BJ (cell line): ENCODE measurements at regions of chr4 and their contacts with region 1.

Region 1: GRCh38 chr4:153142700-153143438 is 61.4 kb upstream of the TRIM2 start:
- DNase-seq: no peak
- H3K4me3 ChIP-seq: no peak overlapping the region
- H3K27me3 ChIP-seq: peaks cover 2% of the 10 kb centered on the region
- CTCF ChIP-seq: peak; percentile 93

Region 2: GRCh38 chr4:153095448-153096204 is 47.2 kb before region 1 on chr4:
- CTCF ChIA-PET with region 1: no interaction called
- POLR2A ChIA-PET with region 1: no interaction called
- DNase-seq: no peak
- H3K4me3 ChIP-seq: no peak overlapping the region
- H3K27me3 ChIP-seq: no peaks in the 10 kb centered on the region; the same call in 1 of the 2 replicates
- CTCF ChIP-seq: no peak

Region 3: GRCh38 chr4:153159728-153160221 is 16.9 kb after region 1 on chr4:
- CTCF ChIA-PET with region 1: interaction called, 13 read pairs
- POLR2A ChIA-PET with region 1: no interaction called
- DNase-seq: peak; percentile 91
- H3K4me3 ChIP-seq: no peak overlapping the region
- H3K27me3 ChIP-seq: peaks cover 7% of the 10 kb centered on the region; the same call in 1 of the 2 replicates
- CTCF ChIP-seq: no peak

Region 4: GRCh38 chr4:153222707-153223426 is 80.0 kb after region 1 on chr4:
- CTCF ChIA-PET with region 1: interaction called, 11 read pairs
- POLR2A ChIA-PET with region 1: no interaction called
- DNase-seq: no peak
- H3K4me3 ChIP-seq: peak overlapping the region; percentile 69
- H3K27me3 ChIP-seq: no peaks in the 10 kb centered on the region
- CTCF ChIP-seq: no peak

Region 5: GRCh38 chr4:153310793-153311192 is 167.9 kb after region 1 on chr4:
- CTCF ChIA-PET with region 1: interaction called, 12 read pairs
- POLR2A ChIA-PET with region 1: no interaction called
- DNase-seq: no peak
- H3K4me3 ChIP-seq: no peak overlapping the region
- H3K27me3 ChIP-seq: no peaks in the 10 kb centered on the region
- CTCF ChIP-seq: no peak

Region 6: DNA sequence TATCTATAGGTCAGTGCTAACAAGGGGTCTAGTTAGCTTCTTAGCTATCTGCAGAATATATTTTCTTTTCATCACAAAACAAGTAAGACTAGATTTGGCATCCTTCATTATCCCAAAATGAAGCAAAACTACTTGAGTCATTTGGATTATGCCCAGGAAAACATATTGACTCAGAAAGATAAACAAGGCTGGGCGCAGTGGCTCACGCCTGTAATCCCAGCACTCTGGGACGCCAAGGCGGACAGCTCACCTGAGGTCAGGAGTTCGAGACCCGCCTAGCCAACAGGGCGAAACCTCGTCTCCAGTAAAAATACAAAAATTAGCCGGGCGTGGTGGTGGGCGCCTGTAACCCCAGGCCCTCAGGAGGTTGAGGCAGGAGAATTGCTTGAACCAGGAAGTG is 183.6 kb after region 1 on chr4:
- CTCF ChIA-PET with region 1: interaction called, 12 read pairs
- POLR2A ChIA-PET with region 1: no interaction called
- DNase-seq: no peak
- H3K4me3 ChIP-seq: no peak overlapping the region
- H3K27me3 ChIP-seq: no peaks in the 10 kb centered on the region
- CTCF ChIP-seq: no peak